HepG2 (cell line): ENCODE measurements at regions of chr3 and their contacts with region 1.

Region 1: DNA sequence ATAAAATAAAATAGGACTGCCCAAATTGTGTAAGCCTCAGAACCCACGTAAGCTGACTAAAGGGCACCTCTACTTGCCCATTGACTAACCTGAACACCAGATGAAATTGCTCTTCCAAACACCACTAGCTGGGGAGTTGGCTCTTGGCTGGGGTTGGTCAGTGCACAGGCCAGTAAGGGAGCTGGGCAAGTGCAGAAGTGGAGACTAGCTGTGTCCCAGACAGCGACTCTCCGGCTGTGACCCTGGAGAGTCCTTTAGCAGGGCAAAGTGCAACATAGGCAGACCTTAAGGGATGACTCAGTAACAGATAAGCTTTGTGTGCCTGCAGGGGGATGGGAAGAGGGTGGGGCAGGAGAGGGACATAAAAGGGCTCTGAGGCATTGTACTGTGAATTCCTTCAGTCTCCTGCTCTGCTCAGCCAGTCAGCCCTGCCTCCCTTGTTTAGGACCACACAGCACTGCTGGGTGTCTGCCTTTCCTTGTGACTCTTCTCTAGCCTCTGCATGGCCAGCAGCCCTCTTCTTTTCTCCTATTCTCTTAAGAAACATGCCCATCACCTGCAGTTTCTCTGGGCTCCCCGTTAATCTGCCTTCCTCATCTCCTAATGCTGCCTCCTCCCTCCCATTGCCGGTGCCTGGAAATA is 13.2 kb downstream of the NR1I2 start:
- DNase-seq: peak; percentile 98
- ATAC-seq: peak; percentile 96
- H3K4me3 ChIP-seq: peak overlapping the region; percentile 31 to 43 (median 33); a peak in 5 of 6 replicates
- H3K27ac ChIP-seq: peak overlapping the region; percentile 90
- H3K4me1 ChIP-seq: peaks cover 53% of the 10 kb centered on the region
- H3K27me3 ChIP-seq: no peaks in the 10 kb centered on the region
- CTCF ChIP-seq: 0 out of 2 replicates have a peak, but pooled peaks have one; percentile 19
- EP300 ChIP-seq: peak; percentile 63 to 94; a peak in 2 of 4 replicates
- POLR2A ChIP-seq: peak; percentile 72 to 80
- RAD21 ChIP-seq: no peak

Region 2: DNA sequence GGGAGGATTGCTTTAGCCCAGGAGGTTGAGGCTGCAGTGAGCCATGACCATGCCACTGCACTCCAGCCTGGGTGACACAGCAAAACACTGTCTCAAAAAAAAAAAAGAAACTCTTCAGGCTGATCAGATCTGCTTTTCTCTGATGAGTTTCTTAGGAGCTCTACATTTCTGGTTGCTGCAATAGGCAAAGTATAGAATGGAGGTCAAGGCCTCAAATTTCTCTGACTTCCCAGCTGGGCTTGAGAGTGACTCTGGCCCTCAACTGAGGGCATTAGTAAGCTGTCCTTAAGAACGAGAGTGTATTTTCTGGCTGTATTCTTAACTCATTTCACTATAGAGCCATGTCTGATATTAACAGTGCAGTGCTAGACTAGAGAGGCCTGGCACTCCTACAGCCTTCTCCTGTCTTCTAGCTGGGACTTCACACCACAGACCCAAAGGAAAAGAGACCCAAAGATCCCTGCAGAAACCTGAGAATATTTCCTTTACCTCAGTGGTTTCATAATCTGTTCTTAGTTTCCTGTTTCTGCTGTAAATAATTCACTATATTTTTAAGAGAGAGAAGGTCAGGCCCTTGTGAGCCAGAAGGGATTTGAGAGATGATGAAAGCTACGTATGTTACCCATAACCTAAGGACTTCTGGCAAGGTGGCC is 15.2 kb before region 1 on chr3:
- CTCF ChIA-PET with region 1: no interaction called
- POLR2A ChIA-PET with region 1: interaction called, 69 read pairs
- in situ Hi-C with region 1: no loop called
- intact Hi-C with region 1: loop called (anchors 2 kb)
- DNase-seq: no peak
- ATAC-seq: no peak
- H3K4me3 ChIP-seq: no peak overlapping the region
- H3K27ac ChIP-seq: no peak overlapping the region
- H3K4me1 ChIP-seq: peaks cover 51% of the 10 kb centered on the region
- H3K27me3 ChIP-seq: no peaks in the 10 kb centered on the region
- CTCF ChIP-seq: no peak
- EP300 ChIP-seq: no peak
- POLR2A ChIP-seq: no peak
- RAD21 ChIP-seq: no peak